Heart left ventricle (tissue), 16 donors: ENCODE measurements at regions of chr21 and their contacts with region 1.

Region 1: GRCh38 chr21:39004634-39005501 is 178.4 kb downstream of the PSMG1 start:
- DNase-seq: peak; percentile 73 to 84 (median 78)
- ATAC-seq: peak; percentile 54 to 66 (median 60)
- H3K4me3 ChIP-seq: no peak overlapping the region
- H3K27ac ChIP-seq: peak overlapping the region; percentile 75 to 92 (median 83)
- H3K4me1 ChIP-seq: peaks cover 9 to 87% (median 59%) of the 10 kb centered on the region in 12 donors
- H3K27me3 ChIP-seq: no peaks in the 10 kb centered on the region
- CTCF ChIP-seq: no peak
- POLR2A ChIP-seq: no peak

Region 2: GRCh38 chr21:38743761-38744529 is 260.9 kb before region 1 on chr21:
- intact Hi-C with region 1: loop called in 1 of 10 experiments (anchors 10 kb)
- DNase-seq: peak in 2 of 5 donors; percentile 32 to 62
- ATAC-seq: peak; percentile 39 to 95 (median 64)
- H3K4me3 ChIP-seq: peak overlapping the region in 5 of 12 donors; percentile 2 to 24 (median 16)
- H3K27ac ChIP-seq: peak overlapping the region in 9 of 12 donors; percentile 10 to 62 (median 46)
- H3K4me1 ChIP-seq: peaks cover 0 to 20% (median 0%) of the 10 kb centered on the region in 12 donors
- H3K27me3 ChIP-seq: no peaks in the 10 kb centered on the region
- CTCF ChIP-seq: no peak
- POLR2A ChIP-seq: no peak

Region 3: DNA sequence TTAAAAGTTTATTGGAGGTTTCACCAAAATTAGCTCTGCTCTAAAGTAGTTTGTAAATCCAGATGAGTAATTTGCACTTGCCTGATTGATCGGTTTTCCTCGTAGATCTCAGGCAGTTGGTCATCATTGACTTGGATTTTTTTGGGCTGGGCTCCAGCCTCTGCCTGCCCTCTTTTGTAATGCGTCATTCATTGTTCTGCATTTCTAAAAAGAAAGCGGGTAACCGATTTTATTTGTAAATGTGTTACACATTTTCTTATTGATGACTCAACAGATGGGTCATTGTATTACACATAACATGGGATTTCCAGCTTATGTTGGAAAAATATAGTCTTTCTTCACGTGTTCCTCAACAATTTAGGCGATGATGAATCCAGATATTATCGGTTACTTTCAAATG is 193.6 kb before region 1 on chr21:
- intact Hi-C with region 1: loop called in 5 of 10 experiments (anchors 5 to 10 kb)
- DNase-seq: no peak
- ATAC-seq: no peak
- H3K4me3 ChIP-seq: peak overlapping the region in 4 of 12 donors; percentile 90 to 97 (median 95)
- H3K27ac ChIP-seq: peak overlapping the region in 11 of 12 donors; percentile 17 to 99 (median 96)
- H3K4me1 ChIP-seq: peaks cover 0 to 70% (median 34%) of the 10 kb centered on the region in 12 donors
- H3K27me3 ChIP-seq: no peaks in the 10 kb centered on the region
- CTCF ChIP-seq: no peak
- POLR2A ChIP-seq: no peak

Region 4: GRCh38 chr21:38824124-38824822 is 180.6 kb before region 1 on chr21:
- intact Hi-C with region 1: no loop called
- DNase-seq: no peak
- ATAC-seq: peak in 2 of 4 donors; percentile 9 to 41
- H3K4me3 ChIP-seq: no peak overlapping the region
- H3K27ac ChIP-seq: peak overlapping the region; percentile 20 to 79 (median 67)
- H3K4me1 ChIP-seq: peaks cover 3 to 59% (median 31%) of the 10 kb centered on the region in 12 donors
- H3K27me3 ChIP-seq: no peaks in the 10 kb centered on the region
- CTCF ChIP-seq: no peak
- POLR2A ChIP-seq: no peak

Region 5: GRCh38 chr21:38937844-38938742 is 66.8 kb before region 1 on chr21:
- intact Hi-C with region 1: no loop called
- DNase-seq: no peak
- ATAC-seq: peak in 1 of 4 donors; percentile 29
- H3K4me3 ChIP-seq: no peak overlapping the region
- H3K27ac ChIP-seq: no peak overlapping the region
- H3K4me1 ChIP-seq: no peaks in the 10 kb centered on the region
- H3K27me3 ChIP-seq: no peaks in the 10 kb centered on the region
- CTCF ChIP-seq: no peak
- POLR2A ChIP-seq: no peak

Region 6: DNA sequence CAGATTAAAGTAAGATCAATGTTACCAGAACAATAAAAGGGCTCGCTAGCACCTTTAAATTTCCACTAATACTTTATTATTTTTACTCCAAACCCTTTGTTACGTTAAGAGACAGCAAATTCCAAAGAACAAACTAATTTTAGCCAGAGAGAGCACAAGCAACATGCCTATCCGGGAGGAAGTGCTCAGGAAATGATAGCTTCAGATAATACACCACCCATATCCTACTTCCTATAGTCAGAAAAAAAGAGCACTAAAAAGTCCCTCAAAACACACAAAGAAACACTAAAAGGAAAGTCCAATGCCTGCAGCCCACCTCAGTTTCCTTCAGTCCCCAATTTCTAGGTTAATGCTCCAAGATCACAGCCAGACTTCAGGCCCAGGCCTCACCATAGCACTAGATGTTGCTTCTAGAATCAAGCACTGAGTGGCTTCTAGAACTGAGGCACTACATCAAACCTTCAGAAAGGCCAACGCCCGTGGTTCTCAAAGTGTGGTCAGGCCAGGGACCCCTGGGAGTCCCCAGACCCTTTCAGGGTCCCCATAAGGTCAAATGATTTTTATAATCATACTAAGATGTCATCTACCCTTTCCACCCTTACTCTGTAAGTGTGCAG is 35.7 kb after region 1 on chr21:
- intact Hi-C with region 1: loop called in 2 of 10 experiments (anchors 5 kb)
- DNase-seq: no peak
- ATAC-seq: peak in 3 of 4 donors; percentile 70 to 88 (median 79)
- H3K4me3 ChIP-seq: no peak overlapping the region
- H3K27ac ChIP-seq: peak overlapping the region; percentile 45 to 87 (median 78)
- H3K4me1 ChIP-seq: peaks cover 0 to 28% (median 20%) of the 10 kb centered on the region in 12 donors
- H3K27me3 ChIP-seq: no peaks in the 10 kb centered on the region
- CTCF ChIP-seq: no peak
- POLR2A ChIP-seq: no peak

Region 7: GRCh38 chr21:39153373-39153772 is 148.5 kb after region 1 on chr21:
- intact Hi-C with region 1: no loop called
- DNase-seq: no peak
- ATAC-seq: peak in 2 of 4 donors; percentile 50 to 56
- H3K4me3 ChIP-seq: no peak overlapping the region
- H3K27ac ChIP-seq: no peak overlapping the region
- H3K4me1 ChIP-seq: no peaks in the 10 kb centered on the region
- H3K27me3 ChIP-seq: no peaks in the 10 kb centered on the region
- CTCF ChIP-seq: peak in 9 of 12 donors; percentile 10 to 50 (median 24)
- POLR2A ChIP-seq: no peak